Activated T-helper 1 cell treated with anti-CD3 and anti-CD28 coated beads, Interleukin-12 subunit alpha, Interleukin-12 subunit beta, Interleukin-2, Interleukin-4 antibody, amounts not matched to agents 30 ng/mL and 10 ng/mL and 1 ng/mL, durations not matched to agents 14 hours and 24 hours and 36 hours (primary cell): ENCODE measurements at regions of chr1 and their contacts with region 1.

Region 1: GRCh38 chr1:119367427-119368124 is 1.0 kb upstream of the HAO2 start:
- DNase-seq: no peak
- H3K4me3 Mint-ChIP-seq: no peak overlapping the region
- H3K27ac Mint-ChIP-seq: no peak overlapping the region
- H3K4me1 Mint-ChIP-seq: no peaks in the 10 kb centered on the region
- H3K27me3 Mint-ChIP-seq: peaks cover 23% of the 10 kb centered on the region

Region 2: GRCh38 chr1:118151312-118151937 is 1216.2 kb before region 1 on chr1:
- intact Hi-C with region 1: loop called (anchors 10 kb)
- DNase-seq: no peak
- H3K4me3 Mint-ChIP-seq: no peak overlapping the region
- H3K27ac Mint-ChIP-seq: no peak overlapping the region
- H3K4me1 Mint-ChIP-seq: no peaks in the 10 kb centered on the region
- H3K27me3 Mint-ChIP-seq: no peaks in the 10 kb centered on the region

Region 3: GRCh38 chr1:119254067-119254720 is 113.4 kb before region 1 on chr1:
- intact Hi-C with region 1: no loop called
- DNase-seq: no peak
- H3K4me3 Mint-ChIP-seq: no peak overlapping the region
- H3K27ac Mint-ChIP-seq: no peak overlapping the region
- H3K4me1 Mint-ChIP-seq: no peaks in the 10 kb centered on the region
- H3K27me3 Mint-ChIP-seq: no peaks in the 10 kb centered on the region

Region 4: DNA sequence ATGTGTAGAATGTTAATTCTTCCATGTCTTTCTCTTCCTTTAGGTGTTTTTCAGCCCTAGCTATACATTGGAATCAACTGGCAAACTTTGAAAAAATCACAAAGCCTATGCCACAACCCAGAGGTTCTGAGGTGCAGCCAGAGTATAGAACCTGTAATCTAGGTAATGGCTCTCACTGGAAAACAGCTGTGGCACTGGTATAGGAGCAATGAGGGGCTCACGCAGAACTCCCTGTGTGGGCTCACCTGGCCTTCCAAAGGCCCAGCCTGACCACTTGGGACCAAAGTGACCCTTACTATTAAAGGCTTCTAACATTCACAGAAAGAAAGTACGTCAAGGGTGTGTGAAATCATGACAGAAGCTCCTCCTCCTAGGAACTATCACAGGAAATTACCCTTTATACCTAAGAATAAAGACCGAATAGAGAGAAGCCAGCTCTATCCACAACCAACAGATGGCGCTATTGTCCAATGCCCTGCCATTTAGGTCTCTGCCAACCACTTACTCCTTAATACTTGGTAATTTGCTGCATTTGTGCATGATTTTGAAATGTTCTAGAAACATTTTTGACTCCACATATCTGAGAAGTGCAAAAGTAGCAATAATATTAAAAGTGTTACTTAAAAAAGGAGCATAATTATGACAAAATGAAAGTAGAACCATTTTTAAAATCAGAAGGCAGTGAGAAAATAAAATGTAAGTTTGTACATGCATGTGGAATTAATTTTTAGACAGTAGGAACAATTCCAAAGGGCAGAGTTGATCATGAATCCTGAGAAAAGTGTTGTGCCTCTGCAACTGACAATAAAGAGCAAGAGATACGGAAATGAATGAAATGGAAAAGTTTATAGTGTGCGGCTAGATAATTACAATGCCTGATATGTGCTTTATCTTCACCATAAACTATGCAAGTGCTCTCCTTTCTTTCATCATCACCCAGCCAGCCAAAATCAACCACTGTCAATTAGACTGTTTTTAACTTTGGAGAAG is 92.1 kb before region 1 on chr1:
- intact Hi-C with region 1: loop called (anchors 1 kb)
- DNase-seq: peak; percentile 11
- H3K4me3 Mint-ChIP-seq: no peak overlapping the region
- H3K27ac Mint-ChIP-seq: no peak overlapping the region
- H3K4me1 Mint-ChIP-seq: no peaks in the 10 kb centered on the region
- H3K27me3 Mint-ChIP-seq: peaks cover 11% of the 10 kb centered on the region

Region 5: DNA sequence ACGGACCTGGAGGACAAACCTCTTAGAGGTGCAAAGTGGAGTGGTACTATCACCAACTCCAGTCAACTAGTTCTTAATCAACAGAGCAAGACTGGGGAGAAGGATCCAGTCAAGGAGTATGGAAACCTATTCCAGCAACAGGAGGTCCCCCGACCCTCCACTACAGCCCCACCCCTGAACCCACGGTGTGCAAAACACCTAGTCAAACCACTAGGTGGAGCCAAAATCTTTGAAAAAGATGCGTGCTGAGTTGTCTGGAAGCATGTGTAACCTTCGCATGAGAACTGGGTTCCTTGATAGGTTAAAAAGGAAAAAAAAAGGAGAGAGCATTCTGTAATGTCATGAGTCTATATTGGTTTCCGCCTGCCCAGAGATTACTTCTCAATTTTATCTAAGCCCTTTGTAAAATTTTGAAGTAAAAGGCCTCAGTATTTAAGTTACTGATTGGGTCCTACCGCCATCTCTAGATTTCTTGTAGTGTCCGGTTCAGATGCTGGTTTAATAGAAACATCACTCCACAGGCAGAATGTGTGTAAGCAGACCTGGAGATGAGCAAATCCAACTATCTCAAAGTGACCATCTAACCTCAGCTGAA is 80.9 kb before region 1 on chr1:
- intact Hi-C with region 1: loop called (anchors 1 kb)
- DNase-seq: no peak
- H3K4me3 Mint-ChIP-seq: no peak overlapping the region
- H3K27ac Mint-ChIP-seq: no peak overlapping the region
- H3K4me1 Mint-ChIP-seq: no peaks in the 10 kb centered on the region
- H3K27me3 Mint-ChIP-seq: peaks cover 15% of the 10 kb centered on the region

Region 6: DNA sequence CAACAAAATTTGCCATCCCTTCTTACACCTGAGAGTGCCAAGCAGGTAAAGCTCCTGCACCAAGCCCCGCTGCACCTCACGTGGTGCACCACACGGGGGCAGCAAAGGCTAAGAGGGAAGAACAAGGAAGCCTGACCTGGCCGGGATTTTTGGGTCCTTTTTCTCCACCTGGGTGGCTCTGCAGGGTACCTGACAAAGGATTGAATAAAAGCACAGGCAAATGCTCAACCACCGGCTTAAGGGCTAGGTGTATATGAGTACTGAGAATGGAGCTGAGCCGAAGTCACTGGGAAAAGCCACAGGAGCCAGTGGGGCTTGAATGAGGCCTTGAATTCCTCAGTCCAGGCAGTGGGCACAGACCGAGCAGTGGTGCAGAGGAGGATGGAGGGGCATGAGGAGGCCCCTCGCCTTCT is 244.1 kb after region 1 on chr1:
- intact Hi-C with region 1: no loop called
- DNase-seq: peak; percentile 63
- H3K4me3 Mint-ChIP-seq: no peak overlapping the region
- H3K27ac Mint-ChIP-seq: no peak overlapping the region
- H3K4me1 Mint-ChIP-seq: no peaks in the 10 kb centered on the region
- H3K27me3 Mint-ChIP-seq: peaks cover 5% of the 10 kb centered on the region